ENCODE measurements at regions of chr3 and their contacts with region 1.

Region 1: GRCh38 chr3:72818092-72818773 is 30.0 kb downstream of the SHQ1 start:
- DNase-seq: no peak
- H3K4me3 ChIP-seq: no peak overlapping the region
- H3K27ac ChIP-seq: no peak overlapping the region
- H3K4me1 ChIP-seq: peaks cover 0 to 3% (median 1%) of the 10 kb centered on the region in 4 experiments; a peak in 1 of 7 replicates
- H3K27me3 ChIP-seq: no peaks in the 10 kb centered on the region
- CTCF ChIP-seq: peak in 2 of 3 experiments; percentile 29 to 55; a peak in 2 of 4 replicates
- EP300 ChIP-seq: no peak
- POLR2A ChIP-seq: no peak
- RAD21 ChIP-seq: peak; percentile 74 to 82

Region 2: DNA sequence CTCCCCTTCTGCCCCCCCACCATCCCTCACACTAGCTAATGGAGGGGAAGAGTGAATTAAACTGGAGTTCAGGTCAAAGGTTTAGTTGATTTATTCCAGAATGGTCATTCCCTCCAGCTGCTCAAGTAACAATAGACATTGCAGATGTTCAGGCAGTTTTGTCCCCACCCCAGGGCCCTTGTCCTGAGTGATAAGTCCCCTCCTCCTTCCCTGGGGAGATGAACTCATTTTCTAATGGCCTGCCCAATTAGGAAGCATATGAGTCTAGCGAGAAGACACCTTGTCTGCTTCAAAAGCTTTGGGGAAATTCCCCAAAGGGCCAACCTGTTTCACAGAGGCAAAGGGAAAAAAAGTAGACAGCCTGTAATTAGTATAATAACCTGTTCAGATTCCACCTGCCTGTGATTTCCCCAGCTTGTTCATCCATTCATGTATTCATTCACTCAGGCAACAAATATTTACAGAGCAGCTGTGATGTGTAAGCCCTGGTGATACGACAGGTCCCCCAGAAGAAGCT is 135.2 kb before region 1 on chr3:
- CTCF ChIA-PET with region 1: interaction called, 10 read pairs
- POLR2A ChIA-PET with region 1: no interaction called
- DNase-seq: no peak
- H3K4me3 ChIP-seq: no peak overlapping the region
- H3K27ac ChIP-seq: no peak overlapping the region
- H3K4me1 ChIP-seq: no peaks in the 10 kb centered on the region
- H3K27me3 ChIP-seq: no peaks in the 10 kb centered on the region
- CTCF ChIP-seq: no peak
- EP300 ChIP-seq: no peak
- POLR2A ChIP-seq: no peak
- RAD21 ChIP-seq: no peak

Region 3: DNA sequence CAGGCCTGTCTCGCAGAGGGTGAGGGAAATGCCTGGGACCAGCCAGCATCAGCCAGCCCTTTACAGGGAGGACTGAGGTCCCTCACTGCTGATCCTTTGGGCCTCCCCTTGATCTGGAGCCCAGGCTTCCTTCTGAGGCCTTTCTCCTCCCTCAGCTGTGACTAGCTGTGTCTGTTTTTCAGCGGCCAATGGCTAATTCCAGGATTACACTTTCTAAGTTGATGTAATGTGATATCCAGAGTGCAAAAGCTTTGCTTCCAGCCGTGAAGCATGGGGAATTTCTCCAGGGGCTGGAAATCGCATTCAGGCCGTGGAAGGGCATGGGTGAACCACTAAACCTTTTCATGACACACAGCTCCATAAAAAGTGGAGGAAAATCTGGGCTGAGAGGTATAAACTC is 127.6 kb before region 1 on chr3:
- CTCF ChIA-PET with region 1: interaction called, 11 read pairs
- POLR2A ChIA-PET with region 1: no interaction called
- DNase-seq: no peak
- H3K4me3 ChIP-seq: no peak overlapping the region
- H3K27ac ChIP-seq: no peak overlapping the region
- H3K4me1 ChIP-seq: peaks cover 0 to 5% (median 2%) of the 10 kb centered on the region in 4 experiments; a peak in 1 of 7 replicates
- H3K27me3 ChIP-seq: no peaks in the 10 kb centered on the region
- CTCF ChIP-seq: no peak
- EP300 ChIP-seq: no peak
- POLR2A ChIP-seq: no peak
- RAD21 ChIP-seq: no peak

Region 4: GRCh38 chr3:72698154-72698917 is 119.9 kb before region 1 on chr3:
- CTCF ChIA-PET with region 1: interaction called, 14 read pairs
- POLR2A ChIA-PET with region 1: no interaction called
- DNase-seq: peak in 1 of 2 experiments; percentile 21
- H3K4me3 ChIP-seq: no peak overlapping the region
- H3K27ac ChIP-seq: 0 out of 2 replicates have a peak overlapping the region, but pooled peaks have one; percentile 24
- H3K4me1 ChIP-seq: peaks cover 0 to 11% (median 7%) of the 10 kb centered on the region in 4 experiments; a peak in 3 of 7 replicates
- H3K27me3 ChIP-seq: no peaks in the 10 kb centered on the region; a peak in 1 of 7 replicates
- CTCF ChIP-seq: no peak
- EP300 ChIP-seq: peak in 1 of 2 experiments; percentile 70; a peak in 1 of 3 replicates
- POLR2A ChIP-seq: no peak
- RAD21 ChIP-seq: peak; percentile 7 to 12; a peak in 1 of 4 replicates

Region 5: GRCh38 chr3:72836923-72837322 is 18.7 kb after region 1 on chr3:
- CTCF ChIA-PET with region 1: interaction called, 10 read pairs
- POLR2A ChIA-PET with region 1: no interaction called
- DNase-seq: no peak
- H3K4me3 ChIP-seq: no peak overlapping the region
- H3K27ac ChIP-seq: no peak overlapping the region
- H3K4me1 ChIP-seq: no peaks in the 10 kb centered on the region
- H3K27me3 ChIP-seq: no peaks in the 10 kb centered on the region
- CTCF ChIP-seq: no peak
- EP300 ChIP-seq: no peak
- POLR2A ChIP-seq: no peak
- RAD21 ChIP-seq: no peak

Region 6: GRCh38 chr3:72847751-72848702 is 29.8 kb after region 1 on chr3 and contains the start of gene SHQ1:
- CTCF ChIA-PET with region 1: interaction called, 11 read pairs
- POLR2A ChIA-PET with region 1: no interaction called
- DNase-seq: peak; percentile 57 to 93
- H3K4me3 ChIP-seq: peak within 1 kb of the TSS; percentile 67 to 82 (median 77)
- H3K27ac ChIP-seq: no peak within 1 kb of the TSS
- H3K4me1 ChIP-seq: peaks cover 0 to 6% (median 0%) of the 10 kb centered on the region in 4 experiments; a peak in 3 of 7 replicates
- H3K27me3 ChIP-seq: peaks cover 0 to 17% (median 11%) of the 10 kb centered on the region in 4 experiments; a peak in 6 of 7 replicates
- CTCF ChIP-seq: no peak
- EP300 ChIP-seq: no peak
- POLR2A ChIP-seq: no peak
- RAD21 ChIP-seq: no peak
- total RNA-seq, gene SHQ1: 33.7 and 34.4 TPM in 2 replicates